Endothelial cell of umbilical vein (primary cell): ENCODE measurements at regions of chr17 and their contacts with region 1.

Region 1: DNA sequence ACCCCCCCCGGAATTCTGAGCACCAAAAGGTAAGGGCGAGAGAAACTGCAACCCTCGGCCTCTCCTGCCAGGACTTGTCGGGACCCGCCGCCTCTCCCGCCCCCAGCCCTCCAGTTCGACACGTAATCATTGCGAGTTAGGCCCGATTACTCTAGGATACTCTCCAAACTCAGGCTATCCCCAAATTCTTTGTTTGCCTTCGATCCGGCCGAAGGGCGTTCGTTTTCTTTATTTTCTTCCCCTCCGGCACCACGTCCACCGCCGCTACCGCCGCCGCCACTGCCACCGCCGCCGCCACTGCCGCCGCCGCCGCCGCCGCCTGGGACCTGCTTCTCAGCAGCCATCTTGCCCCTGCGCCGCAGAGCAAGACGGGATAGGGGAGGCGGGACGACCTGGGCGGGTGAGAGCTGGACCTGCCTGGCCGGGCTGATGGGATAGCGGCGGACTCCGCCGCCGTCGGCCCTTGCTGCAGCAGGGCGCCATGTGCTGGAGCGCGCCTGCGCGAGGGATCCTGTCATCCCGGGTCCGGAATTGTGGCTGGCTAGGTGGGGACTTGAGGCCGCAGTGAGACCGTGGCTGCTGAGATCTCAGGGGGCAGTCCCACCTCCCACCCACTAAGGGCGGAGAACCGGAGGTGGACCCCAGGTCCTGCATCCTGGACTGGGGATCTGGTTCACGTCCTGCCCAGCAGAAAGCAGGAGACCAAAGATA is at the start of gene SRP68:
- DNase-seq: peak; percentile 94
- H3K4me3 ChIP-seq: peak within 1 kb of the TSS; percentile 59 to 95 (median 73)
- H3K27ac ChIP-seq: peak within 1 kb of the TSS; percentile 67
- H3K4me1 ChIP-seq: peaks cover 16% of the 10 kb centered on the region
- H3K27me3 ChIP-seq: peaks cover 34 to 40% of the 10 kb centered on the region in 2 experiments
- CTCF ChIP-seq: no peak
- POLR2A ChIP-seq: peak; percentile 96
- total RNA-seq, gene SRP68: 77.6 and 81.7 TPM in 2 replicates

Region 2: GRCh38 chr17:76027159-76027839 is 45.0 kb before region 1 on chr17 and contains the start of gene EVPL:
- CTCF ChIA-PET with region 1: no interaction called
- POLR2A ChIA-PET with region 1: no interaction called
- dilution Hi-C with region 1: no loop called
- intact Hi-C with region 1: loop called (anchors 5 kb)
- DNase-seq: no peak
- H3K4me3 ChIP-seq: no peak within 1 kb of the TSS
- H3K27ac ChIP-seq: no peak within 1 kb of the TSS
- H3K4me1 ChIP-seq: peaks cover 9% of the 10 kb centered on the region
- H3K27me3 ChIP-seq: no peaks in the 10 kb centered on the region
- CTCF ChIP-seq: no peak
- POLR2A ChIP-seq: no peak
- total RNA-seq, gene EVPL: not detected in 2 replicates

Region 3: DNA sequence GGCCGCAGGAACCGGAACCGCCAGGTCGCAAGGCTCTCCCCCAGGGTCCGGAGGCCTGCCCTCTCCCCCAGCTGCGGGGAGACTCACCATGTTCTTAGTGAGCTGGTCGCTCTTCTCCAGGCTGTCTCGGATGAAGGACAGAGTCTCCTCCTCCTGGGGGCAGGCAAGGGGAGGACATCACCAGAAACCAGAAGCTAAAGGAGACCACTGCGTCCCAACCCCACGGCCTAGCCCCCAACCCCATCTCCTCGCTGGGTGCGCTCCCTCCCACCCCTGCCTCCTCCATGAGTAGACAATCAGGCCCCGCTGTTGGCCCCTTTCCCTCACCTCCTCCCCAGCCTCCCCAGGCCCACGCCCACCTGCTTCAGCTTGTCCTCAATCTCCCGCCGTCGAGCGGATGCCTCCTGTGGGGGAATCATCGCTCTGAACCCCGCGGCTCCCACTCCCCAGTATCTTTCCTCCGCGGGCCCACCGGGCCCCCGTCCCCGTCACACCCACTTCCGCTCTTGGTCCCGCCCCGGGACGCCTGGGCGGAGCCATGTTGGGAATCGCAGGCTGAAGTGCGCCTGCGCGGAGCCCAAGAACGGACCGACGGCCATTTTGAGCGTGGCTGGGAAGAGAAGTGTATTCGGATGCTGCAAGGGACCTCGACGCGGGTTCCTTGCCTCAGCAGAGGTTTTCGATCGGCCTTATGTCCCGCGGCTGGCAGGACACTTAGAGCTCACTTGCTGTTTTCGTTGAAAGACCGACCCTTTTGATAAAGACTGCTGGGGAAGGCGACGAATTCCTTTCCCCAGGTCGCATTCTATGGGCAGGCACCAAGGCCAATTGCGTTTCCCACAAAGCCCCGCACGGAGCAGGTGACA is 31.2 kb after region 1 on chr17 and contains the start of gene EXOC7:
- CTCF ChIA-PET with region 1: no interaction called
- POLR2A ChIA-PET with region 1: interaction called, 5 read pairs
- dilution Hi-C with region 1: no loop called
- intact Hi-C with region 1: loop called (anchors 1 kb)
- DNase-seq: peak; percentile 91
- H3K4me3 ChIP-seq: peak within 1 kb of the TSS; percentile 73 to 87 (median 78)
- H3K27ac ChIP-seq: peak within 1 kb of the TSS; percentile 52
- H3K4me1 ChIP-seq: peaks cover 8% of the 10 kb centered on the region
- H3K27me3 ChIP-seq: no peaks in the 10 kb centered on the region
- CTCF ChIP-seq: peak in 1 of 2 donors; percentile 17
- POLR2A ChIP-seq: peak; percentile 88
- total RNA-seq, gene EXOC7: 122 and 137 TPM in 2 replicates